ENCODE measurements at regions of chr11 and their contacts with region 1.

Region 1: GRCh38 chr11:76207642-76208401 is 1.5 kb upstream of the WNT11 start:
- DNase-seq: peak; percentile 85 to 89
- ATAC-seq: peak; percentile 52 to 79
- H3K4me3 ChIP-seq: peak overlapping the region; percentile 60
- H3K27ac ChIP-seq: peak overlapping the region; percentile 70 to 85; a peak in 5 of 6 replicates
- H3K4me1 ChIP-seq: 0 out of 3 replicates have a peak, but pooled peaks cover 9% of the 10 kb centered on the region
- CTCF ChIP-seq: peak; percentile 99
- EP300 ChIP-seq: no peak
- POLR2A ChIP-seq: no peak
- RAD21 ChIP-seq: peak; percentile 79 to 95

Region 2: GRCh38 chr11:76083563-76084451 is 124.0 kb before region 1 on chr11:
- CTCF ChIA-PET with region 1: no interaction called
- POLR2A ChIA-PET with region 1: no interaction called
- DNase-seq: no peak
- ATAC-seq: no peak
- H3K4me3 ChIP-seq: no peak overlapping the region
- H3K27ac ChIP-seq: no peak overlapping the region; a peak in 1 of 6 replicates
- H3K4me1 ChIP-seq: 0 out of 3 replicates have a peak, but pooled peaks cover 4% of the 10 kb centered on the region
- CTCF ChIP-seq: no peak
- EP300 ChIP-seq: no peak
- POLR2A ChIP-seq: no peak
- RAD21 ChIP-seq: no peak

Region 3: DNA sequence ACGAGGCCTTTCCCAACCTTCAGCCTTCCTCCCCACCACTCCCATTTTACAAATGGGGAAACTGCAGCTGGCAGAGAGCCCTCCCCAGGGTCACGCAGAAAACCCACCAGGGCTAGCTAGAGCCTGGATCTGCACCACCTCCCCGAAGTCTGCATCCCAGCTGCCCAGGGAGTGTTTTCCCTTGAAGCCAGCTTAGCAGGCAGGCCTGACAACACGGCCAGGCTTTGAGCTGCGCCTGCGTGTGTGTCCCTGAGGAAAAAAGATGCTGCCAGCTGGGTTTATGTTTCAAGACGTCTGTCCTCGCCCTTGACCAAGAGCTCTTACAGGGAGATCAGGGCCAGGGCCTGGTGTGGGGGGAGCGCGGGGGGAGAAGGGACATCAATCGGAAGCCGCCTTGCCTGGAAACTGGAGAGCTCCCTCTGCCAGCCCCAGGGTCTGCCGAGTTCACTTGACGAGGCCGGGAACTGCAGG is 21.9 kb before region 1 on chr11:
- CTCF ChIA-PET with region 1: interaction called, 114 read pairs
- POLR2A ChIA-PET with region 1: no interaction called
- DNase-seq: no peak
- ATAC-seq: no peak
- H3K4me3 ChIP-seq: no peak overlapping the region
- H3K27ac ChIP-seq: no peak overlapping the region
- H3K4me1 ChIP-seq: no peaks in the 10 kb centered on the region
- CTCF ChIP-seq: no peak
- EP300 ChIP-seq: no peak
- POLR2A ChIP-seq: no peak
- RAD21 ChIP-seq: no peak

Region 4: GRCh38 chr11:76248210-76248609 is 40.4 kb after region 1 on chr11:
- CTCF ChIA-PET with region 1: interaction called, 24 read pairs
- POLR2A ChIA-PET with region 1: no interaction called
- DNase-seq: peak; percentile 52 to 56
- ATAC-seq: peak; percentile 32 to 72; a peak in 3 of 6 replicates
- H3K4me3 ChIP-seq: no peak overlapping the region
- H3K27ac ChIP-seq: no peak overlapping the region
- H3K4me1 ChIP-seq: no peaks in the 10 kb centered on the region
- CTCF ChIP-seq: peak; percentile 27; the same call in 2 of the 3 replicates
- EP300 ChIP-seq: no peak
- POLR2A ChIP-seq: no peak
- RAD21 ChIP-seq: no peak

Region 5: DNA sequence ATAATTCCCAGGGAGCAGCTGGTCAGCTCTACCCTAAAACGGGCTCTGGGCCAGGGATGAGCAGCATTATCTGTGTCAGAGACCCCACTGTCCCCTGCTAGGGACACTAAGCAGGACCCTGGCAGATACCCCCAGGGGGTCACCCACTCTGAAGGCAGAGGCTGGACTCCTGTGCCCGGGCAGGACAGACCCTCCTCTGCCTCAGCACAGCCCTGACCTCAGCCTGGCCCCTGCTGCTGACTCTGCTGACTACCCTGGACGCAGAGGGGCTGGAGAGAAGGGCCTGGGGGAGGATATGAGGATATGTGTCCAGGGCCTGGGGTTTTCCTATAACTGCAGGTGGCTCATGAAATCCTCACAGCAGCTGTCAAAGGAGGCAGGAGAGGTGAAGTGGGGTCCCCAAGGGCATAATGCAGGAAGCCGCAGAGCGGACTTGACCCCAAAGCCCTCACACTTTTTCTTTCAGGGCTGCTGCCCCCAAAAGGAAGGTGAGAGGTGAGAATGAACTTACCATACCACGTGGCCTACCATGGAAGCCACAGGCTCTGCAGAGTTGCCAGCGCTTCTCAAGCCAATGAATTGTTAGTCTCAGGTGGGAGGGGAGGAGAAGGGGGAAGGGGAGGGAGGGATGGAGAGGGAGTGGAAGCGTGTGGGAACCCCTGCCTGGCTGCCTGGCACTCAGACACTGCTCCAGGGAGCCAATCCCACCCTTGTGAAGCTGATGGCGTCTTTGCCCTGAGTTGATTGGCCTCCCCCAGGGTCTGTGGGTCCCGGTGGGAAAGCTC is 75.2 kb after region 1 on chr11:
- CTCF ChIA-PET with region 1: interaction called, 13 read pairs
- POLR2A ChIA-PET with region 1: no interaction called
- DNase-seq: no peak
- ATAC-seq: no peak
- H3K4me3 ChIP-seq: no peak overlapping the region
- H3K27ac ChIP-seq: no peak overlapping the region
- H3K4me1 ChIP-seq: no peaks in the 10 kb centered on the region
- CTCF ChIP-seq: no peak
- EP300 ChIP-seq: no peak
- POLR2A ChIP-seq: no peak
- RAD21 ChIP-seq: no peak

Region 6: DNA sequence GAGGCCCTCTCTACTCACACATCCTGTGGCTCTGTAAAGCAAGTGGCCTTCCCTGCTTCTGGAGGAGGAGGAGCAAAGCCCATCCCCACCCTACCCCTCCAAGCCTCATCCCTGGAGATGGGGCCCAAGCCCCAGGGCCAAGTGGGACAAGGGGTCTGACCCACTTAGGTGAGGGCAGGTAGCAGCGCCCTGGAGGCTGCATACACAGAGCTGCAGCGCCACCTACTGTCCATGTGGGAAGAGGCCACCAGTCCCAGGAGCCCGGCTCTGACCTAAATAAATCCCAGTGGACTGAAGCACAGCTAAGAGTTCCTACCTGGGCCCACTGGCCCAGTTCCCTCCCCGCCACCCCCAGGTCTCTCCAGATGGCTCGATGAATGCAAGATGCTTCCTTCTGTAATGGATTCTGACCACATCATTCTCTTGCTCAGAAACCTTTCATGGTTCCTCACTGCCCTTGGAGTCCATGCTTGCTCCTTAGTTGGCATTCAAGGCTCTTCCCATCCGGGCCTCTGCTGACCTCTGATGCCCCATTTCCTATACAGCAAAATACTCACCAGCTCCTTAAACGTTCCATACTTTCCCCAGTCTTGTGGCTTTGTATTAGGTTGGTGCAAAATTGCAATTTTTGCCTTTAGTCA is 111.0 kb after region 1 on chr11:
- CTCF ChIA-PET with region 1: interaction called, 222 read pairs
- POLR2A ChIA-PET with region 1: interaction called, 4 read pairs
- DNase-seq: peak; percentile 83 to 85
- ATAC-seq: peak; percentile 90 to 98
- H3K4me3 ChIP-seq: no peak overlapping the region
- H3K27ac ChIP-seq: no peak overlapping the region
- H3K4me1 ChIP-seq: no peaks in the 10 kb centered on the region
- CTCF ChIP-seq: peak; percentile 97
- EP300 ChIP-seq: no peak
- POLR2A ChIP-seq: no peak
- RAD21 ChIP-seq: peak; percentile 98

Region 7: GRCh38 chr11:76510060-76511047 is 302.5 kb after region 1 on chr11:
- CTCF ChIA-PET with region 1: interaction called, 13 read pairs
- POLR2A ChIA-PET with region 1: no interaction called
- DNase-seq: peak in 1 of 2 experiments; percentile 10
- ATAC-seq: peak in 1 of 2 experiments; percentile 57; a peak in 3 of 6 replicates
- H3K4me3 ChIP-seq: no peak overlapping the region
- H3K27ac ChIP-seq: no peak overlapping the region
- H3K4me1 ChIP-seq: no peaks in the 10 kb centered on the region
- CTCF ChIP-seq: no peak
- EP300 ChIP-seq: no peak
- POLR2A ChIP-seq: no peak
- RAD21 ChIP-seq: no peak

Region 8: GRCh38 chr11:76721755-76722677 is 514.2 kb after region 1 on chr11:
- CTCF ChIA-PET with region 1: no interaction called
- POLR2A ChIA-PET with region 1: no interaction called
- DNase-seq: peak; percentile 67 to 80
- ATAC-seq: peak; percentile 91 to 97
- H3K4me3 ChIP-seq: no peak overlapping the region
- H3K27ac ChIP-seq: peak overlapping the region in 1 of 2 experiments; percentile 61; a peak in 3 of 6 replicates
- H3K4me1 ChIP-seq: 0 out of 3 replicates have a peak, but pooled peaks cover 4% of the 10 kb centered on the region
- CTCF ChIP-seq: peak; percentile 83
- EP300 ChIP-seq: no peak
- POLR2A ChIP-seq: no peak
- RAD21 ChIP-seq: peak; percentile 68